Activated CD4-positive, alpha-beta T cell treated with anti-CD3 and anti-CD28 coated beads for 36 hours (primary cell): ENCODE measurements at regions of chr11 and their contacts with region 1.

Region 1: GRCh38 chr11:62108017-62108750 is 15.6 kb upstream of the INCENP start:
- DNase-seq: peak; percentile 51
- ATAC-seq: peak; percentile 32
- H3K4me3 Mint-ChIP-seq: no peak overlapping the region
- H3K27ac Mint-ChIP-seq: no peak overlapping the region
- H3K4me1 Mint-ChIP-seq: peaks cover 16% of the 10 kb centered on the region
- H3K27me3 Mint-ChIP-seq: peaks cover 2% of the 10 kb centered on the region

Region 2: DNA sequence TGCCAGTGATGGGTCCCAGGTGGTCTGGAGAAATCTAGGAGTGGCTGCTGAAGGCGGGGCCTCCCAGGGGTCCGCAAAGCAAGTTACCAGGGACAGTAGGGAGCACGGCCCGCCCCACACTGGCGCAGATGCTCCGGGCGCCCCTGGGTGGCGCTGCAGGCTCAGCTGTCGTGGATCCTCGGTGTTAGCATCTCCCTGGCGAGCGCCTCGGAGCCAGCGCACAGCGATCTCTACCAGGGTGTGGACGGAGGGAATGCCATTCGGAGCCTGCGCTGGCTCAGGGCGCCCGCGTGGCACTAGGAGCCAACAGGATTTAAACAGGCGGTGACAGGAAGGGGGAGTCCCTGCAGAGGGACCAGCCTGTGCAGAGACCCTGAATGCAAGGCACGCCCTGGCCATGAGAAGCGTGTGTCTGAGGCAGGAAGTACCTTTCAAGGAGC is 237.0 kb before region 1 on chr11:
- CTCF ChIA-PET with region 1: interaction called, 17 read pairs
- POLR2A ChIA-PET with region 1: no interaction called
- intact Hi-C with region 1: loop called (anchors 1 kb)
- DNase-seq: peak; percentile 84
- ATAC-seq: peak; percentile 98
- H3K4me3 Mint-ChIP-seq: peak overlapping the region; percentile 46
- H3K27ac Mint-ChIP-seq: no peak overlapping the region
- H3K4me1 Mint-ChIP-seq: peaks cover 2% of the 10 kb centered on the region
- H3K27me3 Mint-ChIP-seq: peaks cover 3% of the 10 kb centered on the region

Region 3: DNA sequence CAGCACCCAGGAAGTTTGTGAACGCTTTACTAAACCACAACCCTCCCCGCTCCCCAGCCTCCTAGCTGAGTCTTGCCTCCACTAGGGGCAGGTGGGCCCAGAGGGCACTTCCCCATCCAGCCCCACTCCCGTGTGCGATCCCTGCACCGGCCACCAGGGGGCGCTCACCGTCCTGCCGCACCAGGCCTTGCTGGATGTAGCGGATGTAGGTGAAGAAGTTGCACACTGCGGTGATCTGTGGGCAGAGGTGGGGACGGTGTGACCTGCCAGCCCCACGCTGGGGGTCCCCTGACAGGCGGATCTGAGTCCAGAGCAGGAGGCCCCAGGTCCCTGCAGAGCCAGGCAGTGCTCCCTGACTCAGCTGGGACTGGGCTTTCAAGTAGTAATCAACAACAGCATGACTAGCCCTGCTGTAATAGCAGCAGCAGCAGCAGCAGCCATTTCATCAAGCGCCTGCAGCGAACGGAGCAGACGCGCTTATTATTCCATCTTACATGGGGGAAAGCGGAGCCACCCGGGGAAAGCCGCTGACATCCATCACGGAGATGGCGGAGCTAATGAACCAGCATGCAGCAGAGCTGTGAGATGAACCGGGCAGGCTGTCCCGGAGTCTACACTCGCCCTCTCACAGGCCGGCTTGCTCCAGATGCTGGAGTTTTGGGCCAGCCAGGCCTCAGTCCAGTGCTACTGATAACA is 208.9 kb before region 1 on chr11:
- CTCF ChIA-PET with region 1: interaction called, 151 read pairs
- POLR2A ChIA-PET with region 1: interaction called, 4 read pairs
- intact Hi-C with region 1: loop called (anchors 1 kb)
- DNase-seq: peak; percentile 95
- ATAC-seq: peak; percentile 94
- H3K4me3 Mint-ChIP-seq: peak overlapping the region; percentile 30
- H3K27ac Mint-ChIP-seq: peak overlapping the region; percentile 55
- H3K4me1 Mint-ChIP-seq: peaks cover 3% of the 10 kb centered on the region
- H3K27me3 Mint-ChIP-seq: no peaks in the 10 kb centered on the region

Region 4: DNA sequence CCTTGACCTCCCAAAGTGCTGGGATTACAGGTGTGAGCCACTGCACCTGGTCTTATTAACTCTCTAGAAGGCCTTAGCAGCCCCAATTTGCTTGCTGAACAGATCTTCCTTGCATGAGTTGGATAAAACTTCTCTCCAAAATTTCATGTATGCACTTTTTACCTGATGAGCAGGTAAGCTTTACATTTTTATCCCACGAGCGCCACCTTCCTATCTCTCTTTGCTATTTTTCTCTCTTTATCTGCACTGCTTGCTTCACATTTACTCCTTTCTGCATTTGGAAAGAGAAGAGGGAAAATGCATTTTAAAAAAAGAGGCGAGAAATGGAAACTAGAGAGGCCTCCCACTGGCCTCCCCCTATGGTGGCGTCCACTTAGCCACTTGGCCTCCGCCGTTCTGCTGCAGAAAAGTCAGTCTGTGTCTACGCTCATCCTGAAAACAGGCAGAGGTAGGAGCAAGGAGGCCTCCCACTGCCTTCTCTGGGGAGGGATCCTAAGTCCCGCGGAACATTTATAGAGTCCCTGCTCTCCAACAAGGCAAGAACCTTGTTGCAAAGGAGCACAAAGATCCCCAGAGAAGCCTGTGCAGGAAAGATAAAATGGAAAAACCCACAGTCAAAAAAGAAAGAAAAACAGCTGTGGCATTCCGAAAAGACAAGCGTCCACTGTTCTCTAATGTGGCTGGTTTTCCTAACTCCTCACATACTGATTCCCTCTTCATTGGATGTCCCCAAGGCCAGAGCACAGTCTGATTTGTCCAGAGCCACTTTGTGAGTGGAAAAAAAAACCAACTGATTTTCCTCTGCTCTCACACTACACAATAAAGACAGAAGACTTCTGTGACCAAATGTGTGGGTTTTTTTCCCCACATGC is 46.6 kb before region 1 on chr11:
- CTCF ChIA-PET with region 1: no interaction called
- POLR2A ChIA-PET with region 1: no interaction called
- intact Hi-C with region 1: no loop called
- DNase-seq: no peak
- ATAC-seq: no peak
- H3K4me3 Mint-ChIP-seq: no peak overlapping the region
- H3K27ac Mint-ChIP-seq: no peak overlapping the region
- H3K4me1 Mint-ChIP-seq: no peaks in the 10 kb centered on the region
- H3K27me3 Mint-ChIP-seq: peaks cover 2% of the 10 kb centered on the region

Region 5: GRCh38 chr11:62081378-62082291 is 26.5 kb before region 1 on chr11:
- CTCF ChIA-PET with region 1: interaction called, 72 read pairs
- POLR2A ChIA-PET with region 1: no interaction called
- intact Hi-C with region 1: no loop called
- DNase-seq: peak; percentile 90
- ATAC-seq: peak; percentile 92
- H3K4me3 Mint-ChIP-seq: no peak overlapping the region
- H3K27ac Mint-ChIP-seq: no peak overlapping the region
- H3K4me1 Mint-ChIP-seq: peaks cover 8% of the 10 kb centered on the region
- H3K27me3 Mint-ChIP-seq: no peaks in the 10 kb centered on the region

Region 6: GRCh38 chr11:62123669-62124185 is 15.5 kb after region 1 on chr11 and contains the start of gene INCENP:
- CTCF ChIA-PET with region 1: interaction called, 25 read pairs
- POLR2A ChIA-PET with region 1: no interaction called
- intact Hi-C with region 1: loop called (anchors 1 kb)
- DNase-seq: peak; percentile 97
- ATAC-seq: peak; percentile 98
- H3K4me3 Mint-ChIP-seq: peak within 1 kb of the TSS; percentile 98
- H3K27ac Mint-ChIP-seq: peak within 1 kb of the TSS; percentile 90
- H3K4me1 Mint-ChIP-seq: peaks cover 29% of the 10 kb centered on the region
- H3K27me3 Mint-ChIP-seq: no peaks in the 10 kb centered on the region
- total RNA-seq, gene INCENP: 125 to 140 TPM